MCF 10A (cell line): ENCODE measurements at regions of chr1 and their contacts with region 1.

Region 1: GRCh38 chr1:156838981-156839410 is 19.9 kb downstream of the INSRR start:
- DNase-seq: peak; percentile 60
- H3K4me3 Mint-ChIP-seq: no peak overlapping the region
- H3K27ac Mint-ChIP-seq: no peak overlapping the region
- H3K4me1 Mint-ChIP-seq: no peaks in the 10 kb centered on the region
- H3K27me3 Mint-ChIP-seq: peaks cover 32% of the 10 kb centered on the region
- CTCF ChIP-seq: peak; percentile 93

Region 2: GRCh38 chr1:156500797-156501499 is 338.0 kb before region 1 on chr1:
- CTCF ChIA-PET with region 1: no interaction called
- POLR2A ChIA-PET with region 1: no interaction called
- intact Hi-C with region 1: no loop called
- DNase-seq: peak; percentile 97
- H3K4me3 Mint-ChIP-seq: peak overlapping the region; percentile 85
- H3K27ac Mint-ChIP-seq: peak overlapping the region; percentile 97
- H3K4me1 Mint-ChIP-seq: peaks cover 68% of the 10 kb centered on the region
- H3K27me3 Mint-ChIP-seq: no peaks in the 10 kb centered on the region
- CTCF ChIP-seq: peak; percentile 72

Region 3: DNA sequence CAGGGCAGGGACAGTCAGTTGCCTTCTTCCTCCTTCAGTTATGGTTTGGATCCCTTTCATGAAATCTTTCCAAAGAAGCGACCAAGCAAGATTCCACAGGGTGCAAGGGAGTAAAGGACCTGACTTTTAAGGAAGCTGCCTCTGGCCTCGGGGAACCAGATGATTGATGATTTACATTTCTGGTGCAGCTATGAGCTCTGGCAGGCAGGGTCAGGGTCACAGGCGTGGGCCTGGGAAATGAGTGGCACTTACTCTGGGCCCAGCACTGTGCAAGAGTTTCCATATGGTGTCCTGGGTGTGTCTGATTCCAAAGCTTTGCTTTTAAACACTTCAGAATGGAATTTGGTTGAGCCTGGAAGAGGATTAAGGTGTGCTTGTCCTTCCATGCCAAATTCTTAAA is 126.4 kb before region 1 on chr1:
- CTCF ChIA-PET with region 1: no interaction called
- POLR2A ChIA-PET with region 1: no interaction called
- intact Hi-C with region 1: no loop called
- DNase-seq: peak; percentile 39
- H3K4me3 Mint-ChIP-seq: no peak overlapping the region
- H3K27ac Mint-ChIP-seq: no peak overlapping the region
- H3K4me1 Mint-ChIP-seq: peaks cover 32% of the 10 kb centered on the region
- H3K27me3 Mint-ChIP-seq: no peaks in the 10 kb centered on the region
- CTCF ChIP-seq: no peak

Region 4: DNA sequence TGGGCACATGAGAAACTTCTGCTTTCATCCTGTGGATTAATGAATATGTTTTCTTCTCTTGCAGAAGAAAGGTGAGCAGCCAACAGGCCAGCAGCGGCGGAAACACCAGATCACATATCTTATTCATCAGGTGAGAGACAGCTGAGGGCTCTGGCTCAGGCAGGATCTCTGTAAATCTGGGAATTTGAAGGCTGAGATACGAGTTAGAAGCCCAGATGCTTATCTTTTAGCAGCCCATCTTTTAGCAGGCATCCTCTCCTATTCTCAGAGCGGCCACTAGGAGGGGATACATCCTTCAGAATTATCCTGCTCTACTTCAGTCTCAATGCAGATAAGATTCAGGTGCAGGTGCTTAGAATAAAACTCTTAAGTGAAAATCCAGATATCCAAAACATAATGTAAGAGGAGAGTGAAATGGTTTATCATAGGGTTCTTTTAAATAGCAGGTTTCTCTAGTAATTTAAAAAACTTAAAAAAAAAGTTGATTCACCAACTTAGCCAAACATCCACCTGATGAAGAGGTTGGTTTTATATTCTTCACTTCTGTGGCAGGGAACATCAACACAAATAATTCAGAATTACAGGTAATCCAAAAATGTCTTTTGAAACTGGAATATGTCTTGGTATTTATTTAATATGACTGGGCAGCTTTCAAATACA is 41.7 kb before region 1 on chr1:
- CTCF ChIA-PET with region 1: interaction called, 79 read pairs
- POLR2A ChIA-PET with region 1: interaction called, 3 read pairs
- intact Hi-C with region 1: no loop called
- DNase-seq: peak; percentile 82
- H3K4me3 Mint-ChIP-seq: no peak overlapping the region
- H3K27ac Mint-ChIP-seq: no peak overlapping the region
- H3K4me1 Mint-ChIP-seq: no peaks in the 10 kb centered on the region
- H3K27me3 Mint-ChIP-seq: no peaks in the 10 kb centered on the region
- CTCF ChIP-seq: peak; percentile 93

Region 5: GRCh38 chr1:156813750-156814570 is 25.0 kb before region 1 on chr1:
- CTCF ChIA-PET with region 1: interaction called, 45 read pairs
- POLR2A ChIA-PET with region 1: no interaction called
- intact Hi-C with region 1: no loop called
- DNase-seq: peak; percentile 65
- H3K4me3 Mint-ChIP-seq: peak overlapping the region; percentile 73
- H3K27ac Mint-ChIP-seq: peak overlapping the region; percentile 27
- H3K4me1 Mint-ChIP-seq: peaks cover 48% of the 10 kb centered on the region
- H3K27me3 Mint-ChIP-seq: no peaks in the 10 kb centered on the region
- CTCF ChIP-seq: peak; percentile 55

Region 6: GRCh38 chr1:156860113-156860627 is 21.2 kb after region 1 on chr1:
- CTCF ChIA-PET with region 1: interaction called, 353 read pairs
- POLR2A ChIA-PET with region 1: interaction called, 8 read pairs
- intact Hi-C with region 1: loop called (anchors 1 kb)
- DNase-seq: peak; percentile 60
- H3K4me3 Mint-ChIP-seq: peak overlapping the region; percentile 57
- H3K27ac Mint-ChIP-seq: no peak overlapping the region
- H3K4me1 Mint-ChIP-seq: peaks cover 18% of the 10 kb centered on the region
- H3K27me3 Mint-ChIP-seq: peaks cover 53% of the 10 kb centered on the region
- CTCF ChIP-seq: peak; percentile 98

Region 7: GRCh38 chr1:156927215-156928042 is 88.4 kb after region 1 on chr1:
- CTCF ChIA-PET with region 1: interaction called, 98 read pairs
- POLR2A ChIA-PET with region 1: interaction called, 4 read pairs
- intact Hi-C with region 1: loop called (anchors 1 kb)
- DNase-seq: peak; percentile 91
- H3K4me3 Mint-ChIP-seq: peak overlapping the region; percentile 41
- H3K27ac Mint-ChIP-seq: no peak overlapping the region
- H3K4me1 Mint-ChIP-seq: peaks cover 33% of the 10 kb centered on the region
- H3K27me3 Mint-ChIP-seq: peaks cover 58% of the 10 kb centered on the region
- CTCF ChIP-seq: peak; percentile 97

Region 8: DNA sequence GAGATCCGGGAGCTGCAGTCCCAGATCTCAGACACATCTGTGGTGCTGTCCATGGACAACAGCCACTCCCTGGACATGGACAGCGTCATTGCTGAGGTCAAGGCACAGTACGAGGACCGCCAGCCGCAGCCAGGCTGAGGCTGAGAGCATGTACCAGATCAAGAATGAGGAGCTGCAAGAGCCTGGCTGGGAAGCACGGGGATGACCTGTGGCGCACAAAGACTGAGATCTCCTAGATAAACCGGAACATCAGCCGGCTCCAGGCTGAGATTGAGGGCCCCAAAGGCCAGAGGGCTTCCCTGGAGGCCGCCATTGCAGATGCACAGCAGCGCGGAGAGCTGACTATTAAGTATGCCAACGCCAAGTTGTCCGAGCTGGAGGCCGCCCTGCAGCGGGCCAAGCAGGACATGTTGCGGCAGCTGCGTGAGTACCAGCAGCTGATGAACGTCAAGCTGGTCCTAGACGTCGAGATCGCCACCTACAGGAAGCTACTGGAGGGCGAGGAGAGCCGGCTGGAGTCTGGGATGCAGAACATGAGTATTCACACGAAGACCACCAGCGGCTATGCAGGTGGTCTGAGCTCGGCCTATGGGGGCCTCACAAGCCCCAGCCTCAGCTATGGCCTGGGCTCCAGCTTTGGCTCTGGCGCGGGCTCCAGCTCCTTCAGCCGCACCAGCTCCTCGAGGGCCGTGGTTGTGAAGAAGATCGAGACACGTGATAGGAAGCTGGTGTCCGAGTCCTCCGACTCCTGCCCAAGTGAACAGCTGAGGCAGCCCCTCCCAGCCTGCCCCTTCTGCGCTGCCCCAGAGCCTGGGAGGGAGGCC is 235.2 kb after region 1 on chr1:
- CTCF ChIA-PET with region 1: interaction called, 10 read pairs
- POLR2A ChIA-PET with region 1: no interaction called
- intact Hi-C with region 1: no loop called
- DNase-seq: peak; percentile 81
- H3K4me3 Mint-ChIP-seq: no peak overlapping the region
- H3K27ac Mint-ChIP-seq: no peak overlapping the region
- H3K4me1 Mint-ChIP-seq: no peaks in the 10 kb centered on the region
- H3K27me3 Mint-ChIP-seq: no peaks in the 10 kb centered on the region
- CTCF ChIP-seq: peak; percentile 60